AG04449 (cell line): ENCODE measurements at regions of chr2 and their contacts with region 1.

Region 1: GRCh38 chr2:238847841-238848690 is at the start of gene TWIST2:
- DNase-seq: peak; percentile 85
- H3K4me3 ChIP-seq: peak within 1 kb of the TSS; percentile 89
- CTCF ChIP-seq: peak; percentile 26

Region 2: DNA sequence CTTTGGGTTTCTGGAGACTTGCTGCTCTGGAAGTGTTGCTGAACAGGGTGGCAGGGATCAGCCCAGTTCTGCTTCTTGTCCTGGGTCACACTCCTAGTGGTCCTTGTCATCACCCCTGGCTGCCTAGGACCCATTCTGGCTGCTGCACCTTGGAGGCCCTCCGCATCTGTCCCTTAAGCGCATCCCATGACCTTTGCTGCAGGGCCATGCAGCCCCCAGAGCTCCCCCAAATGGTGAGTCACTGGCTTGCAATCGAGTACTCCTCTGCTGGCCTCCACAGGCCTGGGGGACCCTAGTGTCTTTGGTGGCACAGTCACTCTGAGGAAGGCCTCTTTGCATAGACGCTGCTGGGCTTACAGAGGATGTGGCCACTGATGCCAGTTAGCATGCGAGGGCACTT is 232.9 kb before region 1 on chr2:
- CTCF ChIA-PET with region 1: no interaction called
- POLR2A ChIA-PET with region 1: no interaction called
- DNase-seq: no peak
- H3K4me3 ChIP-seq: no peak overlapping the region
- CTCF ChIP-seq: no peak

Region 3: GRCh38 chr2:238864207-238865014 is 16.3 kb after region 1 on chr2:
- CTCF ChIA-PET with region 1: interaction called, 25 read pairs
- POLR2A ChIA-PET with region 1: interaction called, 22 read pairs
- DNase-seq: peak; percentile 98
- H3K4me3 ChIP-seq: peak overlapping the region; percentile 18
- CTCF ChIP-seq: no peak